GM13976 (cell line): ENCODE measurements at regions of chr12 and their contacts with region 1.

Region 1: GRCh38 chr12:108803428-108804105 is 53.8 kb downstream of the SSH1 start:
- DNase-seq: peak; percentile 88
- CTCF ChIP-seq: peak; percentile 84

Region 2: DNA sequence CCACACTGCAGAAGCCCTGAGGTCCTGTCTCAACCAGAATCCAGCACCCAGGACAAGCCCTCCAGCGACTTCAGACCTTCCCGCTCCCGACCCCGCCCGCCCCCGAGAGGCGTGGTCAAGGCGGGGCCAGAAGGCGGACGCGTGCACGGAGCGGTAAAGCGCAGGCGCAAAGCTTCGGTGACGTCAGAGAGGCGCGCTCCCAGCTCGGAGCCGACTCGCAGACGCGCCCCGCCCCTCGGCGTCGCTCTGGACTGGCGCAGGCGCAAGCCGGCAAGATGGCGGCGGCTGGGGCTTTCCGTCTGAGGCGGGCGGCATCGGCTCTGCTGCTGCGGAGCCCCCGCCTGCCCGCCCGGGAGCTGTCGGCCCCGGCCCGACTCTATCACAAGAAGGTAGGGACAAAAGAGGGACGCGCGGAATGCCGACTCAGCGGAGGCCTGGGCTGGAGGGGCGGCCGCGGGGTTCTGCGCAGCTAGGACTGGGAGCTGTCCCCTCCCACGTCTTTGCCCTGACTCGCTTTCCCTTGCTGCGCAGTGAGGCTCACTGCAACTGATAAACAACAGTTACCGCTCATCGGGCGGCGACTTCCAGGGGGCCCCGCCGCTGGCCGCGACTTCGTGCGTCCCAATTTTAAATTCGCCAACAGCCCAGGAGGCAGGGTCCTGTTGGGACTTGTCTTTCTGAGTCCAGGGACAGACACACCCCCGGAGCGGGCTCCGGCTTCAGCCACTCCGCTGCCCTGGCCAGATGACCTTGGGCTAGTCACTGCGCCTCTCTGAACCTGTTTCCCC is 241.0 kb before region 1 on chr12 and contains the start of gene ISCU:
- in situ Hi-C with region 1: loop called (anchors 10 kb)
- DNase-seq: peak; percentile 98
- CTCF ChIP-seq: no peak

Region 3: DNA sequence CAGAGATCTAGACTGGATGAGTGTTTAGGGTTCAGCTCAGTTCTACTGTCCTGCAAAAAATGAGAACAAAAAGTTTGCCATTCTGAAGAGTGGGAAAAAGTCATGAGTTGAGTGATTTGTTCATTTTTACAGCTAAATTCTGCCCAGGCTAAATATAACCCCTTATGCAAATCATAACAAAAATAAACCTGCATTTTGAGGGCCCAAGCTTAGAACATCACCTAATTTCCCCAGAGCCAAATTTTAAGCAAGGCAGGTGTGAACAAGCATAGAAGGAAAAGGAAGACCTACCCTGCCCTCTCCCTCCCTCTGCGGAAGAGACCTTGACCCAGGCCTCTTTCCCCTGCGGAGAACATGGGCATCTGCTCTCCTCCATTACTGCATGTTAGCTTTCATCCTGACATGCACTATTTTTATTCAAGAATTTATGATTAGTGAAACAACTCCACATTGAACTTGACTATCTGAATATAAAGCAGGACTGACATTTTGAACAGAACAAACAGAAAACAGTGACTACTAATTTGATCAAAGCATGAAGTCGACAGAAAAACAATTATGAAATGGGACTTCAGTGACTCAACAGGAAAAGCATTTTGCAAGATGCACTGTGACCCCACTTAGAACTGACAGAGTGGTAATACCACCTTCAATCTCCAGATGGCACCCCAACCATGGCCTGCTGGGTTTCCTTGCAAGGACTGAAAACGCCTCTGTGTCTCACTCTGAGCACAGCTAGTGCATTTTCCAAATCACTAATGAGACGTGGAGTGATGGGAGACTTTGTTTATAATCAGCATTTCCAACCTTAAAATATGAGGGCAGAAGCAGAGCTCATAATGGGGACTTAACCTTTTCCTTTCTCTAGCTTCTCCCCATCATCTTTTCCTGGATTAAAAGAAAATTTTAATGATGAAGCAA is 139.0 kb before region 1 on chr12:
- in situ Hi-C with region 1: loop called (anchors 10 kb)
- DNase-seq: peak; percentile 70
- CTCF ChIP-seq: peak; percentile 83

Region 4: GRCh38 chr12:109302358-109302757 is 498.8 kb after region 1 on chr12:
- in situ Hi-C with region 1: no loop called
- DNase-seq: no peak
- CTCF ChIP-seq: no peak